ENCODE measurements at regions of chr3 and their contacts with region 1.

Region 1: GRCh38 chr3:120095226-120095978 is 1.2 kb upstream of the GSK3B start:
- DNase-seq: peak; percentile 70 to 96
- H3K4me3 ChIP-seq: peak overlapping the region; percentile 70 to 90
- H3K27ac ChIP-seq: peak overlapping the region; percentile 97 to 100
- H3K4me1 ChIP-seq: peaks cover 0 to 5% of the 10 kb centered on the region in 2 donors
- H3K27me3 ChIP-seq: no peaks in the 10 kb centered on the region
- CTCF ChIP-seq: no peak

Region 2: GRCh38 chr3:119702530-119703157 is 392.8 kb before region 1 on chr3 and contains the start of gene CFAP91:
- intact Hi-C with region 1: loop called (anchors 5 kb)
- DNase-seq: peak; percentile 93 to 99
- H3K4me3 ChIP-seq: peak within 1 kb of the TSS; percentile 54 to 73
- H3K27ac ChIP-seq: peak within 1 kb of the TSS; percentile 65
- H3K4me1 ChIP-seq: peaks cover 0 to 5% of the 10 kb centered on the region in 2 donors
- H3K27me3 ChIP-seq: no peaks in the 10 kb centered on the region
- CTCF ChIP-seq: no peak
- total RNA-seq, gene CFAP91: 3.5 TPM

Region 3: DNA sequence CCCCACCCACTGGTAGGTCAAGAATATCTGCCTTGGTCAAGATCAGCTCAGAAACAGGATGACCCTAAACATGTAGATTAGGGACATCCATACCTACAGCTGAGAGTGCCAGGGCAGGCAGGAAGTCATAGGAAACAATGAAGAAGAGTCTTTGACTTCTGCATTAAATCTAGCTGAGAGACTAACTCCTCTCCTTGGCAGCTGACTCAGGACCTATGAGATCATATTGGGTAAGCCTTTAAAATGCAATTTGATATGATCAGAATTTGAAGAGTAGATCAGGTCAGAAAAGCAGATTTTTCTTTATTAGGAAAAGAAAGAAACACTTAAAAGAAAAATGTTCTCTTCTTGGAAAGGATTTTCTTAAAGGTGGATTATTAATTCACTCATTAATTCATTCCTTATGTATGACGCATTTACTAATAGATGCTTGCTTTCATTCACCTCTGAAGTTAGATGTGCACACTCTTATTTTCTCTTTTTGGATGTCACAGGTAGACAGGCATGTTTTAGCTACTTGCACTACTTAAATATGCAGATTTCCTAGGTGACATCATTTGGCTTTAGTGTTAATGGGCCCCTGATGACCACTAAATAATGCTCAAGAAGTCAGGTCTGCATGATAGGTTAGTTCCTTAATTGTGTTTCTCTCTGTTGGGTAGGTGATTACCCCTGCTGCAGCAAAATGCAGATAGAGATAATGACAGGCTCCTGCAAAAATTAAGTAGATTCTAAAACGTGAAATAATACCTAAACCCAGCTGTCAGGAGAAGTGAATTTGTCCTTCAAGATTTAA is 34.5 kb after region 1 on chr3:
- intact Hi-C with region 1: no loop called
- DNase-seq: no peak
- H3K4me3 ChIP-seq: no peak overlapping the region
- H3K27ac ChIP-seq: no peak overlapping the region
- H3K4me1 ChIP-seq: no peaks in the 10 kb centered on the region
- H3K27me3 ChIP-seq: no peaks in the 10 kb centered on the region
- CTCF ChIP-seq: no peak

Region 4: DNA sequence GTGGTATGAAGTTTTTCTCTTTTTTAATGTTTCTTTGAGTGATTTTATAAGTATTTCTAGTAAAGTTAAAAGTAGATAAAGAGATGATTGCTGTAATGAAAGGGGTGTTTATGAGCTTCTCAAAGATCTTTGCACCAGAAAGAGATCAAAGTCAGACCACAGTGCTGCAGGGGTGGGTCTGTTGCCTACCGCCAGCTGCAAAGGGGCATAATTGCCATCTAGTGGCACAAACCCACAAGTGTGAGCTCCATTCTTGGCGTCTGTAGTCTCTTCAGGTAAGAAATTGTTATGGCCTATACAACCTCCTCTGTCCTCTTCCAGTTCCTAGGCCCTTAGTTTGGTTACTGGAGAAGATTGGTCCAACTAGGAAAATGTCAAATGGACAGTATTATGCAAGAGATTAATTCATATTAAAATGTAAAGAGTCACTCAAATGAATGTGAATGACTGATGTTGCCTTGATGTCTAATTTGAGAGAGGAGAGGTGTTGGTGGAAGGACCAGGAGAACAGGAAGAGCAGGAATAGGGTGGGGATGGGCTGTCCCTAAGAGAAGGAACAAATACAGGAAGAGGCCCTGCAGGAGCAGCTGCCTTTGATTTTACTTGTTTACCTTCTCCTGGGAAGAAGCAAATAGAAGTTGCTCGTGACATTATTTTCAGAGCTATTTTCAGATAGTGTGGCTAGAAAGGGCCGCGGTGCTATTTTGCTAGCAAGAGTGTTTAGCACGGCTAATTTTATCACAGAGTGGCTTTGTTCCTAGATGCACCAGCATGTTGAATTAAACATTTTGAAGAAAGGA is 51.9 kb after region 1 on chr3:
- intact Hi-C with region 1: no loop called
- DNase-seq: no peak
- H3K4me3 ChIP-seq: no peak overlapping the region
- H3K27ac ChIP-seq: no peak overlapping the region
- H3K4me1 ChIP-seq: no peaks in the 10 kb centered on the region
- H3K27me3 ChIP-seq: no peaks in the 10 kb centered on the region
- CTCF ChIP-seq: no peak

Region 5: DNA sequence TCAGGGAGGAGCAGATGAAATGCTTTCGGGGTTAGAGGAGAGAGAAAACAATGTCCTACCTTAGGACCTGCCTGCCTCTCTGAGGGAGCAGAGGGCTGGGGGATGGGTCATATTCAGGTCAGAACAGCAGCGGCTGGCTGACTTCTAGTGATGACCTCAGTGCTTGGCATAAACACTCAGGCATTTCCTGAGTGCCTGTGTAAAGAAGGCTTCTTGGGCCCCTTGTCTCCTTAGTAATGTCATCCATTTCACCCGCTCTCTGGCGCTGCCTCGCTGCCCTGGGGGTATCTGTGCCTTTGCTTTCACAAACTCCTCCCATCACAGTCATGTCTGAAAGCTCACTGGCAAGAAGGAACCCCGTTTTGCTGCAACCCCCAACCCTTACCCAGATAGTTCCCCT is 81.7 kb after region 1 on chr3:
- intact Hi-C with region 1: loop called (anchors 5 kb)
- DNase-seq: peak in 1 of 2 donors; percentile 75
- H3K4me3 ChIP-seq: peak overlapping the region in 1 of 2 donors; percentile 37
- H3K27ac ChIP-seq: peak overlapping the region; percentile 62 to 65
- H3K4me1 ChIP-seq: peaks cover 0 to 15% of the 10 kb centered on the region in 2 donors
- H3K27me3 ChIP-seq: no peaks in the 10 kb centered on the region
- CTCF ChIP-seq: no peak

Region 6: DNA sequence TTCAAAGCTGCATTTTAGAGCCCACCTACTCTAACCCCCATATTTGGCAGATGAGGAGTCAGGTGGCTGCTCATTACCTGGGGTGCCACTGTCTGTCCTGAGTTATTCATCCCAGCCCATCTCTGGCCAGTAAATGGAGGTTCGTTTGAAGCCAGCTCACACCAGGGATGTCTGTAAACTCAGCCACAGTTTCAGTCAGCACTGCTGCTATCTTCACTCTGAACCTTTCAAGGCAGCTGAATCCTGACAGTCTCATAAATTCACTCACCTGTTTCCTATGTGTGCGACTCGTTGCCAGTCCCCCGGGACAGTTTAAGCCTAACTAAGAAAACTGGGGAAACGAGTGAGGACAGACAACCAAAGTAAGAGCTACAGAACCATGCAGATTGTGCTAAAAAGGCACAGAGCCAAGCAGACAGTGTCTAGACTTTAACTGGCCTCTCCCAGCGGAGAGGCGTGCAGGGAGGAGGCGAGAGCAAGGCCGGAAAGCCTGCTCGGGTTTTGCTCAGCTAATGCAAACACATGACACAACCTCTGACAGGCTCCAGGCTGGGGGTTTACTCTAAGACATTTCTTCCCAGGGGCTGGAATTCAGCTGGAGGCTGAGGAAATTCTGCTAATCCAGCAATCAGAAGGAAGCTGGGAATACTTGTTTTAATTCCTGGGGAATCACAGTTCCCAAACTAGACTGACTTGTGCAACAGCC is 343.4 kb after region 1 on chr3:
- intact Hi-C with region 1: loop called (anchors 5 kb)
- DNase-seq: peak in 1 of 2 donors; percentile 87
- H3K4me3 ChIP-seq: peak overlapping the region; percentile 11 to 23
- H3K27ac ChIP-seq: peak overlapping the region; percentile 80 to 88
- H3K4me1 ChIP-seq: peaks cover 33 to 86% of the 10 kb centered on the region in 2 donors
- H3K27me3 ChIP-seq: no peaks in the 10 kb centered on the region
- CTCF ChIP-seq: no peak

Region 7: GRCh38 chr3:120726784-120727183 is 631.4 kb after region 1 on chr3:
- intact Hi-C with region 1: no loop called
- DNase-seq: no peak
- H3K4me3 ChIP-seq: no peak overlapping the region
- H3K27ac ChIP-seq: no peak overlapping the region
- H3K4me1 ChIP-seq: no peaks in the 10 kb centered on the region
- H3K27me3 ChIP-seq: no peaks in the 10 kb centered on the region
- CTCF ChIP-seq: no peak

Region 8: GRCh38 chr3:121232309-121233225 is 1137.2 kb after region 1 on chr3:
- intact Hi-C with region 1: no loop called
- DNase-seq: no peak
- H3K4me3 ChIP-seq: no peak overlapping the region
- H3K27ac ChIP-seq: no peak overlapping the region
- H3K4me1 ChIP-seq: no peaks in the 10 kb centered on the region
- H3K27me3 ChIP-seq: no peaks in the 10 kb centered on the region
- CTCF ChIP-seq: no peak

Region 9: GRCh38 chr3:121749276-121750086 is 1654.1 kb after region 1 on chr3 and contains the start of gene GOLGB1:
- intact Hi-C with region 1: loop called (anchors 5 kb)
- DNase-seq: peak; percentile 94 to 98
- H3K4me3 ChIP-seq: peak within 1 kb of the TSS; percentile 86 to 95
- H3K27ac ChIP-seq: peak within 1 kb of the TSS; percentile 92 to 97
- H3K4me1 ChIP-seq: peaks cover 2 to 19% of the 10 kb centered on the region in 2 donors
- H3K27me3 ChIP-seq: no peaks in the 10 kb centered on the region
- CTCF ChIP-seq: no peak
- total RNA-seq, gene GOLGB1: 87.9 TPM

Measured in ascending aorta (tissue), 2 donors.